ENCODE measurements at regions of chr11 and their contacts with region 1.

Region 1: GRCh38 chr11:119406005-119406404 is 17.0 kb downstream of the THY1 start:
- DNase-seq: no peak
- ATAC-seq: no peak
- H3K4me3 ChIP-seq: no peak overlapping the region
- H3K4me3 Mint-ChIP-seq: no peak overlapping the region
- H3K27ac ChIP-seq: no peak overlapping the region
- H3K27ac Mint-ChIP-seq: no peak overlapping the region
- H3K4me1 ChIP-seq: no peaks in the 10 kb centered on the region
- H3K4me1 Mint-ChIP-seq: no peaks in the 10 kb centered on the region
- H3K27me3 ChIP-seq: peaks cover 0 to 3% of the 10 kb centered on the region in 2 experiments
- H3K27me3 Mint-ChIP-seq: peaks cover 0 to 5% of the 10 kb centered on the region in 2 donors

Region 2: GRCh38 chr11:117781627-117782026 is 1624.4 kb before region 1 on chr11:
- CTCF ChIA-PET with region 1: no interaction called
- POLR2A ChIA-PET with region 1: no interaction called
- DNase-seq: no peak
- ATAC-seq: no peak
- H3K4me3 ChIP-seq: no peak overlapping the region
- H3K4me3 Mint-ChIP-seq: no peak overlapping the region
- H3K27ac ChIP-seq: no peak overlapping the region
- H3K27ac Mint-ChIP-seq: no peak overlapping the region
- H3K4me1 ChIP-seq: no peaks in the 10 kb centered on the region
- H3K4me1 Mint-ChIP-seq: no peaks in the 10 kb centered on the region
- H3K27me3 ChIP-seq: peaks cover 0 to 54% of the 10 kb centered on the region in 2 experiments
- H3K27me3 Mint-ChIP-seq: peaks cover 57 to 65% of the 10 kb centered on the region in 2 donors

Region 3: GRCh38 chr11:119295178-119295577 is 110.8 kb before region 1 on chr11:
- CTCF ChIA-PET with region 1: no interaction called
- POLR2A ChIA-PET with region 1: no interaction called
- DNase-seq: peak in 1 of 35 experiments; percentile 11
- ATAC-seq: no peak
- H3K4me3 ChIP-seq: no peak overlapping the region
- H3K4me3 Mint-ChIP-seq: no peak overlapping the region
- H3K27ac ChIP-seq: no peak overlapping the region
- H3K27ac Mint-ChIP-seq: no peak overlapping the region
- H3K4me1 ChIP-seq: no peaks in the 10 kb centered on the region
- H3K4me1 Mint-ChIP-seq: no peaks in the 10 kb centered on the region
- H3K27me3 ChIP-seq: no peaks in the 10 kb centered on the region
- H3K27me3 Mint-ChIP-seq: no peaks in the 10 kb centered on the region

Region 4: DNA sequence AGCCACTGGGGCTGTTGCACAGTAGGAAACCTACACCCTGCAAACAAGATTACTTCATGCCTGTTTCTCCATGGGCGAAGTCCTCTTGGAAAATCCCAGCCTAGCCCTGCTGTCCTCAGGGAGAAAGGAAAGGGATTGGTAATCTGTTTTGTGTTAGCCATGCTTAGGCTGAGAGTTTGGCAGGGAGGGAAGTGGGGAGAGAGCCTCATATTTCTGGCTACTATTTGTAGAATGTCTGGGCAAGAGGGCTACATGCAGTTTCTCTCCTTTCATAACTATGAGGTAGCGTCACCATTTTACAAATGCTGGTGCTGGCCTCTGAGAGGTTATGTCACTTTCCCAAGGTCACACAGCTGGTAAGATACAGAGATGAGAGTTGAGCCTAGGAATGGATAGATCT is 58.8 kb before region 1 on chr11:
- CTCF ChIA-PET with region 1: no interaction called
- POLR2A ChIA-PET with region 1: interaction called in 1 of 2 experiments, 12 read pairs
- DNase-seq: no peak
- ATAC-seq: no peak
- H3K4me3 ChIP-seq: no peak overlapping the region
- H3K4me3 Mint-ChIP-seq: no peak overlapping the region
- H3K27ac ChIP-seq: no peak overlapping the region
- H3K27ac Mint-ChIP-seq: no peak overlapping the region
- H3K4me1 ChIP-seq: peaks cover 0 to 6% of the 10 kb centered on the region in 2 experiments
- H3K4me1 Mint-ChIP-seq: peaks cover 0 to 3% (median 0%) of the 10 kb centered on the region in 3 donors
- H3K27me3 ChIP-seq: peaks cover 0 to 62% of the 10 kb centered on the region in 2 experiments
- H3K27me3 Mint-ChIP-seq: peaks cover 24 to 31% of the 10 kb centered on the region in 2 donors